ENCODE measurements at regions of chr1 and their contacts with region 1.

Region 1: GRCh38 chr1:30099587-30100523 is 623.5 kb downstream of the MATN1 start:
- DNase-seq: no peak
- H3K4me3 Mint-ChIP-seq: no peak overlapping the region
- H3K27ac Mint-ChIP-seq: no peak overlapping the region
- H3K4me1 Mint-ChIP-seq: no peaks in the 10 kb centered on the region
- H3K27me3 Mint-ChIP-seq: peaks cover 8% of the 10 kb centered on the region
- CTCF ChIP-seq: no peak

Region 2: DNA sequence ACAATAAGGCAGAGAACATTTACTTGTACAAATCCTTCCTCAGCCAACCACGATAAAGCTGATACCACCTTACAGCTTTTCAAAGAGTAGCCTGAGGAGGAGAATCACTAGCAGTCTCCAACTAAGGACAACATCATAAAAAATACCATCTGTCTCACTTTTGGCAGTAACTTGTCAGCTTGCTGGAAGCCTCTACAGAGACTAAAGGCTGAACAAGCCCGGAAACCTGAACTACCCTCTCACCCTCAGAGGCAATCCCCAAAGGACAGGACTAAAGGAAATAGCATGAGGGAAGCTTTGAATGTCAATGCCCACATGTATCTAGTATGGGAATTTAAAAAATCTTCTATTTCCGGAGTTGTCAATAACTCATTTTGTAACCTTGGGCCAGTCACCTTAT is 928.8 kb before region 1 on chr1:
- CTCF ChIA-PET with region 1: no interaction called
- POLR2A ChIA-PET with region 1: no interaction called
- intact Hi-C with region 1: no loop called
- DNase-seq: no peak
- H3K4me3 Mint-ChIP-seq: no peak overlapping the region
- H3K27ac Mint-ChIP-seq: peak overlapping the region; percentile 78
- H3K4me1 Mint-ChIP-seq: peaks cover 20% of the 10 kb centered on the region
- H3K27me3 Mint-ChIP-seq: no peaks in the 10 kb centered on the region
- CTCF ChIP-seq: no peak

Region 3: GRCh38 chr1:30489737-30490389 is 390.0 kb after region 1 on chr1:
- CTCF ChIA-PET with region 1: no interaction called
- POLR2A ChIA-PET with region 1: no interaction called
- intact Hi-C with region 1: loop called (anchors 5 kb)
- DNase-seq: no peak
- H3K4me3 Mint-ChIP-seq: no peak overlapping the region
- H3K27ac Mint-ChIP-seq: no peak overlapping the region
- H3K4me1 Mint-ChIP-seq: no peaks in the 10 kb centered on the region
- H3K27me3 Mint-ChIP-seq: no peaks in the 10 kb centered on the region
- CTCF ChIP-seq: no peak